Calu3 (cell line): ENCODE measurements at regions of chrX and their contacts with region 1.

Region 1: GRCh38 chrX:46325312-46325877 is 219.8 kb downstream of the ZNF674 start:
- DNase-seq: peak; percentile 90
- H3K4me3 Mint-ChIP-seq: peak overlapping the region; percentile 31
- H3K27ac Mint-ChIP-seq: peak overlapping the region; percentile 94
- H3K4me1 Mint-ChIP-seq: peaks cover 65% of the 10 kb centered on the region
- H3K27me3 Mint-ChIP-seq: no peaks in the 10 kb centered on the region
- CTCF ChIP-seq: no peak

Region 2: GRCh38 chrX:45849253-45849862 is 476.0 kb before region 1 on chrX:
- CTCF ChIA-PET with region 1: interaction called, 3 read pairs
- intact Hi-C with region 1: loop called (anchors 2 kb)
- DNase-seq: peak; percentile 36
- H3K4me3 Mint-ChIP-seq: peak overlapping the region; percentile 88
- H3K27ac Mint-ChIP-seq: peak overlapping the region; percentile 76
- H3K4me1 Mint-ChIP-seq: no peaks in the 10 kb centered on the region
- H3K27me3 Mint-ChIP-seq: no peaks in the 10 kb centered on the region
- CTCF ChIP-seq: no peak

Region 3: GRCh38 chrX:46208225-46208854 is 117.1 kb before region 1 on chrX:
- CTCF ChIA-PET with region 1: no interaction called
- intact Hi-C with region 1: loop called (anchors 2 kb)
- DNase-seq: peak; percentile 8
- H3K4me3 Mint-ChIP-seq: no peak overlapping the region
- H3K27ac Mint-ChIP-seq: peak overlapping the region; percentile 63
- H3K4me1 Mint-ChIP-seq: peaks cover 51% of the 10 kb centered on the region
- H3K27me3 Mint-ChIP-seq: no peaks in the 10 kb centered on the region
- CTCF ChIP-seq: no peak

Region 4: GRCh38 chrX:46260513-46260912 is 64.9 kb before region 1 on chrX:
- CTCF ChIA-PET with region 1: interaction called, 3 read pairs
- intact Hi-C with region 1: loop called (anchors 5 kb)
- DNase-seq: peak; percentile 55
- H3K4me3 Mint-ChIP-seq: no peak overlapping the region
- H3K27ac Mint-ChIP-seq: peak overlapping the region; percentile 88
- H3K4me1 Mint-ChIP-seq: peaks cover 81% of the 10 kb centered on the region
- H3K27me3 Mint-ChIP-seq: no peaks in the 10 kb centered on the region
- CTCF ChIP-seq: no peak

Region 5: DNA sequence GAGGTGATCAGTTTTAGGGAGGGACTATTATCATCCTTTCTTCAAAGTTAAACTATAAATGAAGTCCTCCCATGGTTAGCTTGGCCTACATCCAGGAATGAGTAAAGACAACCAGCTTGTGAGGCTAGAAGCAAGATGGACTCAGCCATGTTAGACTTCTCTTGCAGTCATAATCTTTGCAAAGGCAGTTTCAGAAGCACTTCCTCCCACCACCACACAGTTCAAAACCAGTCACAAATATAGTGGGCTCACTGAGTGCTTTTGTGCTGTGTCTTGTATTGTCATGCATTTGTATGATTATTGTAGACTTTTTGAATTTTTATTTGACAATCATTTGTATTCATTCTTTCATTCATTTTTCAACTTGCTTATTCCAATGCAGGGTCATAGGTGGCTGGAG is 15.3 kb after region 1 on chrX:
- CTCF ChIA-PET with region 1: no interaction called
- intact Hi-C with region 1: no loop called
- DNase-seq: no peak
- H3K4me3 Mint-ChIP-seq: no peak overlapping the region
- H3K27ac Mint-ChIP-seq: peak overlapping the region; percentile 65
- H3K4me1 Mint-ChIP-seq: peaks cover 29% of the 10 kb centered on the region
- H3K27me3 Mint-ChIP-seq: no peaks in the 10 kb centered on the region
- CTCF ChIP-seq: no peak